Activated CD4-positive, alpha-beta memory T cell treated with anti-CD3 and anti-CD28 coated beads for 36 hours (primary cell): ENCODE measurements at regions of chr6 and their contacts with region 1.

Region 1: GRCh38 chr6:38871741-38872568 is 156.8 kb downstream of the DNAH8 start:
- DNase-seq: peak; percentile 77
- H3K4me3 Mint-ChIP-seq: no peak overlapping the region
- H3K27ac Mint-ChIP-seq: no peak overlapping the region
- H3K4me1 Mint-ChIP-seq: peaks cover 22% of the 10 kb centered on the region
- H3K27me3 Mint-ChIP-seq: peaks cover 2% of the 10 kb centered on the region

Region 2: GRCh38 chr6:37127961-37128862 is 1743.7 kb before region 1 on chr6:
- CTCF ChIA-PET with region 1: no interaction called
- POLR2A ChIA-PET with region 1: no interaction called
- intact Hi-C with region 1: no loop called
- DNase-seq: no peak
- H3K4me3 Mint-ChIP-seq: no peak overlapping the region
- H3K27ac Mint-ChIP-seq: no peak overlapping the region
- H3K4me1 Mint-ChIP-seq: peaks cover 7% of the 10 kb centered on the region
- H3K27me3 Mint-ChIP-seq: peaks cover 2% of the 10 kb centered on the region

Region 3: DNA sequence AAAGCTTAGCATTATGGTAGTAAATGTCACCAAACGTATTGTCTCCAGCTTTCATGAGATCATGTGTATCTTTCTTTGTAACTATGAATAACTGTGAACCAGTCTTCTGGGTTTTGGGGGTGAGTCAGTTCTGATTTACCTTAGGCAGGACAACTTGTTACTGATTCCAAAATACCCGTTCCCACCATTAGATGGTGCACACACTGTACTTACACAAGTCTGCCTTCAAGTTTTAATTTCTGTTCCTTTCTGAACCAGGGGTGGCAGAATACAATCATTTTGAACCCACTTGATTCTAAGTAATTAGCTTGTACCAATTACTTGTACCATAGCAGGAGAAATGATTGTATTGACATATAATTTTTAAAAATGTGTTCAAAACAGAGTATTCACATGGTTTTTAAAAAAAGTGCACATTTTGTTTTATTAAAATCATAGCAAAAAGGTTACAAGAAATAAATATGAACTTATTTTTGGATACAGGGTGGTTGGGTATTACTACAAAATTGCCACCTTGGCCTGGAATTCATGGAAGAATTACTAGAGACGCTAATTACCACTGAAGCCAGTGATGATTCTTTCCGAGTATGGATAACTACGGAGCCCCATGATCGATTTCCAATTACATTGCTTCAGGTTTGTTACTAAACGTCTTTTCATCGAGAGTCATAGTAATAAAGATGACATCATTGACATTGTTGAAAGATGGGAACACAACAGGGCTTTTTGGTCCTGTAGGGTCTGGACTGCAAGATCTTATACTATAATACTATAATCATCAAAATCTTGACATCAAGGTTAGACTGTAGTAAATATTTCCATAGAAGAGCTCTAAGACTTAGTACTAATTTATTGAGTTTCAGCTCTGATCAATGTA is 101.5 kb after region 1 on chr6:
- CTCF ChIA-PET with region 1: interaction called, 30 read pairs
- POLR2A ChIA-PET with region 1: no interaction called
- intact Hi-C with region 1: loop called (anchors 2 kb)
- DNase-seq: peak; percentile 13
- H3K4me3 Mint-ChIP-seq: no peak overlapping the region
- H3K27ac Mint-ChIP-seq: no peak overlapping the region
- H3K4me1 Mint-ChIP-seq: peaks cover 2% of the 10 kb centered on the region
- H3K27me3 Mint-ChIP-seq: peaks cover 13% of the 10 kb centered on the region

Region 4: DNA sequence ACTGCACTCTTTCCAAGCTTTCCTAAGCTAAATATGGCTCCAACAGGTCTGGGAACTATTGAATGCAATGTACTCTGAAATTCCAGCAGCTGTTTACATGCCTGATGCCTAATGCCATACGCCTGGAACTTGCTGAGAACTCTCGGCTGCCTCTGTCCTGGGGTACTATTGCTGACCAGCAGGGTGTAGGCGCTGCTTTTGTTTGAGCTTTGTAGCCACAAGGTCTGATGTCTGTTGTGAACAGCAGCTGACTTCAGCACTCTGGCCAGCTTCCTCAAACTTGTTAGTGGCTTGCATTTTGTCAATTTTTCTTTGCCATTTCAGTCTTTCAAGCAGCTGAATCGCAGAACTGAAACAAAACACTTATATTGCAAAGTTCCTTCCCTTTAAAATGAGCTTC is 216.4 kb after region 1 on chr6:
- CTCF ChIA-PET with region 1: no interaction called
- POLR2A ChIA-PET with region 1: no interaction called
- intact Hi-C with region 1: loop called (anchors 10 kb)
- DNase-seq: peak; percentile 40
- H3K4me3 Mint-ChIP-seq: no peak overlapping the region
- H3K27ac Mint-ChIP-seq: no peak overlapping the region
- H3K4me1 Mint-ChIP-seq: peaks cover 21% of the 10 kb centered on the region
- H3K27me3 Mint-ChIP-seq: peaks cover 51% of the 10 kb centered on the region

Region 5: GRCh38 chr6:39166189-39166911 is 294.4 kb after region 1 on chr6:
- CTCF ChIA-PET with region 1: interaction called, 23 read pairs
- POLR2A ChIA-PET with region 1: no interaction called
- intact Hi-C with region 1: loop called (anchors 10 kb)
- DNase-seq: peak; percentile 90
- H3K4me3 Mint-ChIP-seq: no peak overlapping the region
- H3K27ac Mint-ChIP-seq: no peak overlapping the region
- H3K4me1 Mint-ChIP-seq: peaks cover 4% of the 10 kb centered on the region
- H3K27me3 Mint-ChIP-seq: no peaks in the 10 kb centered on the region

Region 6: GRCh38 chr6:39309942-39310531 is 438.1 kb after region 1 on chr6:
- CTCF ChIA-PET with region 1: interaction called, 54 read pairs
- POLR2A ChIA-PET with region 1: no interaction called
- intact Hi-C with region 1: no loop called
- DNase-seq: peak; percentile 76
- H3K4me3 Mint-ChIP-seq: no peak overlapping the region
- H3K27ac Mint-ChIP-seq: no peak overlapping the region
- H3K4me1 Mint-ChIP-seq: peaks cover 5% of the 10 kb centered on the region
- H3K27me3 Mint-ChIP-seq: peaks cover 36% of the 10 kb centered on the region